Activated CD8-positive, alpha-beta T cell treated with anti-CD3 and anti-CD28 coated beads for 36 hours (primary cell): ENCODE measurements at regions of chr1 and their contacts with region 1.

Region 1: GRCh38 chr1:111769517-111770146 is 13.9 kb downstream of the DDX20 start:
- DNase-seq: peak; percentile 66
- ATAC-seq: peak; percentile 55
- H3K4me3 Mint-ChIP-seq: no peak overlapping the region
- H3K27ac Mint-ChIP-seq: no peak overlapping the region
- H3K4me1 Mint-ChIP-seq: peaks cover 16% of the 10 kb centered on the region
- H3K27me3 Mint-ChIP-seq: no peaks in the 10 kb centered on the region
- CTCF ChIP-seq: peak; percentile 78

Region 2: GRCh38 chr1:111406321-111406768 is 363.3 kb before region 1 on chr1:
- CTCF ChIA-PET with region 1: interaction called, 13 read pairs
- POLR2A ChIA-PET with region 1: no interaction called
- intact Hi-C with region 1: no loop called
- DNase-seq: peak; percentile 51
- ATAC-seq: peak; percentile 93
- H3K4me3 Mint-ChIP-seq: peak overlapping the region; percentile 30
- H3K27ac Mint-ChIP-seq: peak overlapping the region; percentile 48
- H3K4me1 Mint-ChIP-seq: peaks cover 33% of the 10 kb centered on the region
- H3K27me3 Mint-ChIP-seq: no peaks in the 10 kb centered on the region
- CTCF ChIP-seq: no peak

Region 3: DNA sequence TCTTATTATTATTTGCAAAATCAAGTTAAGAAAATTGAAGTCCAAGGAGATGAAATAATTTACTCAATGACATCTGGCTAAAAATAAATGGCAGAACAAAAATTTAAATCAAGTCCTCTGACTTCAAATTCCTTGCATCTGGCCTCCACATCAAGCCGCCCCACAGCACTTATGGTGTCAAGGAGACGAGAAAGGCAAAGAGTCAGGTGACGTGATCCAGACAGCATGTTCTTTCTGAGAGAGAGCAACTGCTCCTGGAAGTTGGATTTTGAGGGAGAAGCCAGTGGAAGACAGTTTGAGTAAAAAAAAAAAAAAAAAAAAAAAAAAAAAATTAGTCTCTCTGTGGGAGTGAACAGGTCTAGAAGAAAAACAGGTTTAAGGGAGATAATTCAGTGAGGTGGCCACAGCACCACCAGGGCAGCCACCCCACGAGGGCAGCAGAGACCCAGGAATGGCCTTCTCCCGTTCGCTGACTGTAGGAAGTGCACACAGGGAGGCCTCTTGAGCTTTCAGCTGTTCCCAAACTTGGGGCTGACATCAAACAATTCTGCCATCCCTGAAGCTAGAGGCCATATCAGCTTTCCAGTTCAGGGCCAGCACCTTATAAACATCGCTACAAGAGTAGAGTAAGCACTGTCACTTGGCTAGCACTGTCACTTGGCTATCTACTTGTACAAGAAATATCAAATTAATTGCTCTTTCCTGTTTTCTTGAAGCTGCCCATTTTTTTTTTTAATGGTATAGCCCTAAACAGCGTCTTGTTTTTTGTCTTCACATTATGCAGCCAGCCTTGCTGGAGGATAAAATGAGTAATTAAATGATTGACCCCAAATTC is 288.0 kb before region 1 on chr1:
- CTCF ChIA-PET with region 1: interaction called, 16 read pairs
- POLR2A ChIA-PET with region 1: no interaction called
- intact Hi-C with region 1: no loop called
- DNase-seq: peak; percentile 77
- ATAC-seq: peak; percentile 67
- H3K4me3 Mint-ChIP-seq: no peak overlapping the region
- H3K27ac Mint-ChIP-seq: no peak overlapping the region
- H3K4me1 Mint-ChIP-seq: peaks cover 29% of the 10 kb centered on the region
- H3K27me3 Mint-ChIP-seq: no peaks in the 10 kb centered on the region
- CTCF ChIP-seq: peak; percentile 52

Region 4: DNA sequence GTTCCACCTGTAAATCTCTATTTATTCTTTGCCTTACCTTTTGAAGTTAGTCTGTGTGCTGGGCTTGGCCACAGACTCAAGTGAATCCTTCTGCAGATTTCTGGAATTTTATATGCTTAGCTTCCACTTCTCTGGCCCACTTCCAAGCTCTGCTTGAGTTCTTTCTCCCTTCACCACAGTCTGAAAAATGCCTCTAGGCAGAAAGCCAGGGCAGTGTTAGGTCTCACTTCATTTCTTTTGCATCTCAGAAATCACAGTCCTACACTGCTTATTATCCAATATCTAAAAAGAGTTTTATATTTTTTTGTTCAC is 79.4 kb before region 1 on chr1:
- CTCF ChIA-PET with region 1: no interaction called
- POLR2A ChIA-PET with region 1: no interaction called
- intact Hi-C with region 1: no loop called
- DNase-seq: no peak
- ATAC-seq: no peak
- H3K4me3 Mint-ChIP-seq: no peak overlapping the region
- H3K27ac Mint-ChIP-seq: no peak overlapping the region
- H3K4me1 Mint-ChIP-seq: peaks cover 41% of the 10 kb centered on the region
- H3K27me3 Mint-ChIP-seq: no peaks in the 10 kb centered on the region
- CTCF ChIP-seq: no peak

Region 5: GRCh38 chr1:111747282-111747734 is 22.3 kb before region 1 on chr1:
- CTCF ChIA-PET with region 1: interaction called, 15 read pairs
- POLR2A ChIA-PET with region 1: no interaction called
- intact Hi-C with region 1: no loop called
- DNase-seq: peak; percentile 89
- ATAC-seq: peak; percentile 92
- H3K4me3 Mint-ChIP-seq: no peak overlapping the region
- H3K27ac Mint-ChIP-seq: no peak overlapping the region
- H3K4me1 Mint-ChIP-seq: no peaks in the 10 kb centered on the region
- H3K27me3 Mint-ChIP-seq: peaks cover 6% of the 10 kb centered on the region
- CTCF ChIP-seq: peak; percentile 80

Region 6: DNA sequence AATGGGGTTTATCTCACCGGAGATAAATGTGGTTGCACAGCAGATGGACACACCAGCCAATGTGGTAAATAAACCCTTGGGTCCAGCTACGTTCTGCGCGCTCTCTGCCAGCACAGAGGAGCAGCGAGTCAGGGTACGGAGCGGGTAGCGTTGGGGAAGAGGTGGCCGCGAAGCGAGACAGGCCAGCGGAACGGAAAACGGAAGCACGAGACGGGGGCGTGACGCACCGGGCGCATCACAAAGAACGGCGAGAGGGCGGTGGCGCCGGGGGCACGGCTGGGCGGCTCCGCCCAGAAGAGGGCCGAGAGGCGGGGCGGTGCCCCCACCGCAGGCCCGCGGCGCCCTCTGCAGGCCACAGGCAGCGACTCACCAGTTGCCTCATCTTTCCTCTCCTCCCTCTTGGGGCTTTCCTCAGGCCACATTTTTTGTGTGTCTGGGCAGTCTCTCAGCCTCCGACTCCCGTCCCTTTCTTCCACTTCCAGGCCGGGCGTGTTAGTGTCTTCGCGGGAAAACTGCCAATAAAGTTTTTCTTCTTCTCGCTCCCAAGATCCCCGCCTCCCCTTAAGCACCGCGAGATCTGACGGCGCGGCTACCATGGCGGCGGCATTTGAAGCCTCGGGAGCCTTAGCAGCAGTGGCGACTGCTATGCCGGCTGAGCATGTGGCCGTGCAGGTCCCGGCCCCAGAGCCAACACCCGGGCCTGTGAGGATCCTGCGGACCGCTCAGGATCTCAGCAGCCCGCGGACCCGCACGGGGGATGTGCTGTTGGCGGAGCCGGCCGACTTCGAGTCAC is 14.1 kb before region 1 on chr1 and contains the start of gene DDX20:
- CTCF ChIA-PET with region 1: interaction called, 25 read pairs
- POLR2A ChIA-PET with region 1: interaction called, 13 read pairs
- intact Hi-C with region 1: no loop called
- DNase-seq: peak; percentile 96
- ATAC-seq: peak; percentile 93
- H3K4me3 Mint-ChIP-seq: peak within 1 kb of the TSS; percentile 88
- H3K27ac Mint-ChIP-seq: peak within 1 kb of the TSS; percentile 98
- H3K4me1 Mint-ChIP-seq: peaks cover 33% of the 10 kb centered on the region
- H3K27me3 Mint-ChIP-seq: no peaks in the 10 kb centered on the region
- CTCF ChIP-seq: peak; percentile 84
- total RNA-seq, gene DDX20: 15.3 to 15.9 TPM